RWPE1 (cell line): ENCODE measurements at regions of chr11 and their contacts with region 1.

Region 1: GRCh38 chr11:8092587-8093424 is 11.8 kb downstream of the TUB start:
- DNase-seq: peak; percentile 64
- H3K27ac ChIP-seq: no peak overlapping the region
- CTCF ChIP-seq: peak; percentile 28; the same call in 1 of the 2 replicates

Region 2: GRCh38 chr11:8006349-8006977 is 86.3 kb before region 1 on chr11:
- CTCF ChIA-PET with region 1: interaction called, 63 read pairs
- POLR2A ChIA-PET with region 1: no interaction called
- DNase-seq: peak; percentile 63
- H3K27ac ChIP-seq: no peak overlapping the region
- CTCF ChIP-seq: peak; percentile 84

Region 3: GRCh38 chr11:8033305-8034105 is 59.3 kb before region 1 on chr11:
- CTCF ChIA-PET with region 1: interaction called, 67 read pairs
- POLR2A ChIA-PET with region 1: no interaction called
- DNase-seq: peak; percentile 74
- H3K27ac ChIP-seq: no peak overlapping the region
- CTCF ChIP-seq: peak; percentile 85